A673 (cell line): ENCODE measurements at regions of chr5 and their contacts with region 1.

Region 1: DNA sequence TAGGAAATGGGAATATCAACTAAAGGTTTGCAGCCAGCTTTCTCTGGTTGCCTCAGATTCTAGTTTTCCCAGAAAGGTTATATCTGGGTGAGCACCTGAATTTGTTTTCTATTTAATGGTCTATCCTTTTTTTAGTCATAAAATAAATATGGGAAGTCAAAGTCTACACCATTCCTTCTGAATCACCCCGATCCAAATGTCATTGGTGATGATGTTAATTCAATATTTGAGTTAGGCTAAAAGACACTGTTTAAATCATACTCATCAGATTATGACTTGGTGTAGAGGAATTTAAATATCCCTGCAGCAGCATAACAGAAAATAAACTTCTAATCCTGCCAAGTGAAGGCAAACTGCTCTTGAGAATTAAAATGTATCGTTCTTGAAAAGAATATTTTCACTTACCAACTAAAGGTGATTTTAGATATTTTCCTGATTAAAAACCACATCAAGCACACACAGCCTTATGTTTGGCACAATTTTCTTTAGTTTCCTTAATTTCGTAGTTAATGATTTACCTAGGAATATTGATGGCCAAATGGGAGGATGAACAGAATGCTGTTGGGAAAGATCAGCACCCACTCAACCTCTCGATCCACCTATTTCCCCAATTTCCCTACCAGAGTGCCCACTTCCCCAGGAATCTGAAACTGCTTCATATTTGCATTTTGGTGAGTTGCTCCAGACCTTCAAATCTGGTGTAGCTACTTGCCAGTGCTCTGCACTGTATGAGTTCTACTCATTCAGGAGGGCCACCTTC is 103.1 kb upstream of the TSLP start:
- DNase-seq: no peak
- H3K4me3 ChIP-seq: no peak overlapping the region
- H3K27ac ChIP-seq: no peak overlapping the region
- H3K4me1 ChIP-seq: no peaks in the 10 kb centered on the region
- H3K27me3 ChIP-seq: peaks cover 4% of the 10 kb centered on the region
- CTCF ChIP-seq: no peak

Region 2: GRCh38 chr5:111070272-111071134 is 102.1 kb after region 1 on chr5:
- CTCF ChIA-PET with region 1: no interaction called
- POLR2A ChIA-PET with region 1: interaction called, 12 read pairs
- intact Hi-C with region 1: no loop called
- DNase-seq: peak; percentile 33
- H3K4me3 ChIP-seq: no peak overlapping the region
- H3K27ac ChIP-seq: no peak overlapping the region
- H3K4me1 ChIP-seq: peaks cover 6% of the 10 kb centered on the region
- H3K27me3 ChIP-seq: peaks cover 74% of the 10 kb centered on the region
- CTCF ChIP-seq: no peak

Region 3: GRCh38 chr5:111401906-111402305 is 433.5 kb after region 1 on chr5:
- CTCF ChIA-PET with region 1: no interaction called
- POLR2A ChIA-PET with region 1: no interaction called
- intact Hi-C with region 1: no loop called
- DNase-seq: no peak
- H3K4me3 ChIP-seq: no peak overlapping the region
- H3K27ac ChIP-seq: no peak overlapping the region
- H3K4me1 ChIP-seq: no peaks in the 10 kb centered on the region
- H3K27me3 ChIP-seq: no peaks in the 10 kb centered on the region
- CTCF ChIP-seq: 0 out of 2 replicates have a peak, but pooled peaks have one; percentile 18